Astrocyte of the cerebellum (primary cell): ENCODE measurements at regions of chr11 and their contacts with region 1.

Region 1: GRCh38 chr11:76807206-76807875 is 24.2 kb downstream of the TSKU start:
- DNase-seq: peak; percentile 68
- H3K4me3 ChIP-seq: no peak overlapping the region
- CTCF ChIP-seq: peak; percentile 77

Region 2: GRCh38 chr11:76501526-76502210 is 305.7 kb before region 1 on chr11:
- in situ Hi-C with region 1: no loop called
- DNase-seq: no peak
- H3K4me3 ChIP-seq: no peak overlapping the region
- CTCF ChIP-seq: no peak

Region 3: DNA sequence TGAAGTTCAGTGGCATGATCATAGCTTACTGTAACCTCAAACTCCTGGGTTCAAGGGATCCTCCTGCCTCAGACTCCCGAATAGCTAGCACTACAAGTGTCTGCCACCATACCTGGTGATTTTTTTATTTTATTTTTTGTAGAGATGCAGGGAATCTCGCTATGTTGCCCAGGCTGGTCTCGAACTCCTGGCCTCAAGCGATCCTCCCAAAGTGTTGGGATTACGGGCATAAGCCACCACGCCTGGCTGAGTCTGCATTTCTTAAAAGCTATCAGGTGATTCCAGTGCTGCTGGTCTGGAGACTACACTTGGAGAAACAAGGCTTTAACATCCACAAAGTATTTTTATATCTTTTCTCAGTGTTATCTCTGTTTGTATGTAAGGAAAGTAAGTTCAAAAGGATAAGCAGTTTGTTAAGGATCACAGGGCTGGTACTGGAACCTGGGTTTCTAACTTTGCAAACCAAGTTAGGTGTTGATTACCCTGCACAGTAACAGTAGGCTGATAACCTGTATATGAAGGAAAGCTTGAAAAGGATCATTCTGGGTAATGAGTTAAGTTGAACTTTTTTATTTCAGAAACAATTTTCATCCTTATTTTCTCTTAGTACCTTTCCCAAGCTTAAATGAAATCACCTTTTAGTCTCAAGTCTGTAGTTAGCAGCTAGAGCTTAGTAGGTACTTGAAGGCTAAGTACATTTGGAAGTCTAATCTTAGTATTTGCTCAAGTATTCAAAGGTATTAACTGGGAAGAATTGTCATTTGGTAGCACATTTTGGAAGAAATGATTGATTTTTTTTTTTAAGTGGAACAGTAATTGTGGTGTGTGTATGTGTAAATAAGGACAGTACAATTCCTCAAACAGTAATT is 65.9 kb after region 1 on chr11:
- in situ Hi-C with region 1: loop called (anchors 5 kb)
- DNase-seq: no peak
- H3K4me3 ChIP-seq: no peak overlapping the region
- CTCF ChIP-seq: no peak